ENCODE measurements at regions of chr14 and their contacts with region 1.

Region 1: GRCh38 chr14:76386915-76387782 is 11.2 kb downstream of the ESRRB start:
- DNase-seq: peak; percentile 87
- CTCF ChIP-seq: peak; percentile 98

Region 2: DNA sequence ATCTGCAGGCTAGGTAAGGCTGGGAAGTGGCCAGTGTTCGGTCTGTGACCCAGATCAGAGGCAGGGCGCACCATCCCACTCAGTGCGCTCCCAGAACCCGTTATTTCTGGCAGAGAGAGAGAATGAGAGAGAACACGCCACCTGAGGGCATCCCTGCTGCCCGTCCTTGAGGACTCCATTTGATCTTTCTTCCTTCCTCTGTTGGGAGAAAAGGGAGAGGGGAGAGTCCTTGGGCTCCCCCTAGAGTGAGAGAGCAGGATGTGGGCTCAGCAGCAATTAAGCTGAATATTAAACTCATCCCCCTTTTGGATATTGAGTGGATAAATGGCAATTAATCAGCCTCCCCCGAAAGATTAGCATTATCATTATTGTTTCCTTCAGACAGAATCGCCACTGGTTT is 331.0 kb before region 1 on chr14:
- CTCF ChIA-PET with region 1: interaction called, 159 read pairs
- POLR2A ChIA-PET with region 1: no interaction called
- DNase-seq: no peak
- CTCF ChIP-seq: peak; percentile 17

Region 3: GRCh38 chr14:76375947-76376404 is 11.2 kb before region 1 on chr14 and contains the start of gene ESRRB:
- CTCF ChIA-PET with region 1: interaction called, 19 read pairs
- POLR2A ChIA-PET with region 1: no interaction called
- DNase-seq: no peak
- CTCF ChIP-seq: no peak

Region 4: DNA sequence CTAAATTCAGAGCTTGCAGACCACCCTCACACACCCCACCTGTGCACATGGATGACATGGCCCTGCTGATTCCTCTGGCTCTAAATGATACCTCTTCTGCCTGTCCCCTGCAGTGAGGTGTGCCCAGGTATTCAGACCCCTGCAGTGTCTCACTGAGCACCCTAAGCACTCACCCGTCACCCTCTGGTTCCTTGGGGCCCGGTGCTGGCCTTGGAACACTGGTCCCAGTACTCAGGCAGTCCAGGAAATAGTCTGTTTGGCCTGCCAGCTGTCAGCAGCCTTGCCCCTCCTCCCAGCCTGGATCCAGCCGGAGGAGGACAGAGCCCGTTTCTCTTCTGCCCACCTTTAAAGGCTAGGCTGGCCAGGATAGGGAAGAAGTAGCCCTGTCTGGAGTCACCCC is 33.7 kb after region 1 on chr14:
- CTCF ChIA-PET with region 1: no interaction called
- POLR2A ChIA-PET with region 1: no interaction called
- DNase-seq: no peak
- CTCF ChIP-seq: no peak